ENCODE measurements at regions of chr3 and their contacts with region 1.

Region 1: GRCh38 chr3:148991194-148992026 is at the start of gene GYG1:
- DNase-seq: peak; percentile 82
- H3K4me3 Mint-ChIP-seq: peak within 1 kb of the TSS; percentile 68
- H3K27ac Mint-ChIP-seq: peak within 1 kb of the TSS; percentile 77
- H3K4me1 Mint-ChIP-seq: peaks cover 30% of the 10 kb centered on the region
- H3K27me3 Mint-ChIP-seq: no peaks in the 10 kb centered on the region
- total RNA-seq, gene GYG1: 21.5 to 22.1 TPM

Region 2: DNA sequence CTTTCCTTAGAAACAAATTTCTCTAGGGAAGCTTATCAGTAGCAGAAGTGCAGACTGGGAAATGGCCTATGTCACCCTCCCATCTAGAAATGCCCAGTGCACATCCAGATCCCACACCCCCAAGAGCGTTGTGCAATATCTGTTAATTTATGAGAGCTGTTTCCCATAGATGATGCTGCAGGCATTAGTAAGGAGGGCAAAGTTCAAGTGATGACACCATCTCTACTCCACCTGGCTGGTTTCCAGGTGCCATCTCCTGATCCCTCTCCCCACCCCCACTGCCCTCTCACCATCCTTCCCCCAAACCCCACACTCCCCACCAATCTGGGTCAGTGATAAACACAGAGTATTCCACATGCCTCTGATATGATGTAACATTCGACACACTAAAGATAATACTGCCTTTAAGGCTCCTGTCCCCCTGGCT is 254.3 kb before region 1 on chr3:
- CTCF ChIA-PET with region 1: no interaction called
- POLR2A ChIA-PET with region 1: no interaction called
- intact Hi-C with region 1: no loop called
- DNase-seq: no peak
- H3K4me3 Mint-ChIP-seq: no peak overlapping the region
- H3K27ac Mint-ChIP-seq: no peak overlapping the region
- H3K4me1 Mint-ChIP-seq: no peaks in the 10 kb centered on the region
- H3K27me3 Mint-ChIP-seq: no peaks in the 10 kb centered on the region

Region 3: GRCh38 chr3:148962513-148962912 is 28.9 kb before region 1 on chr3:
- CTCF ChIA-PET with region 1: interaction called, 3 read pairs
- POLR2A ChIA-PET with region 1: interaction called, 3 read pairs
- intact Hi-C with region 1: loop called (anchors 2 kb)
- DNase-seq: no peak
- H3K4me3 Mint-ChIP-seq: no peak overlapping the region
- H3K27ac Mint-ChIP-seq: no peak overlapping the region
- H3K4me1 Mint-ChIP-seq: peaks cover 2% of the 10 kb centered on the region
- H3K27me3 Mint-ChIP-seq: peaks cover 6% of the 10 kb centered on the region

Region 4: DNA sequence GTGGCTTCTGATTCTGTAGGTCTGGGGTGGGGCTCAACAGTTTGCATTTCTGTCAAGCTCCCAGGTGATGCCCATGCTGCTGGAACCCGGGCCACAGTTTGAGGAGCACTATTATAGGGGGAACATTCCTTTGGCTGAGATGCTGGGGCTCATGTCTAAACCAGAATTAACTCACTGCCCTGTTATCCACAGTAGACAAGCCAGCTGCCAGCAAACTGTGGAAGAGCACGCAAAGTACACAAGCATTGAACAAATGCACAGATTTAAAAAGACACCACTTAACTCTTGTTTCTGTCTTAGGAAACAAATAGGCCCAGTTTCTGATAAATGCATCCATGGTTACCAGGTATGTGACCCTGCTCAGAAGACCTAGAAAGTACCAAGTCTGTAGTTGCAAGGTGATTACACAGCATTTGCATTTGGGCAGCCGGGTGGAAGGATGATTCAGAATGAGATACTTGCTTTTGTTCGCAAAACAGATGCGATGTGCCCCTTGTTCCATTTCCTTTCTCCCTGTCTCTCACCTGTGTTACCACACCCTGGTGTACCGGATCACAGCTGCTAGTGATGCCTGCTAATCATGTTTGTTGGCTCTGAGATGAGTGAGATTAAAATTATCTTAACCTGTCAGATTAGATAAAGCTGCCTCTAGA is 12.4 kb after region 1 on chr3:
- CTCF ChIA-PET with region 1: interaction called, 4 read pairs
- POLR2A ChIA-PET with region 1: interaction called, 6 read pairs
- intact Hi-C with region 1: loop called (anchors 2 kb)
- DNase-seq: peak; percentile 52
- H3K4me3 Mint-ChIP-seq: no peak overlapping the region
- H3K27ac Mint-ChIP-seq: no peak overlapping the region
- H3K4me1 Mint-ChIP-seq: peaks cover 23% of the 10 kb centered on the region
- H3K27me3 Mint-ChIP-seq: no peaks in the 10 kb centered on the region

Region 5: DNA sequence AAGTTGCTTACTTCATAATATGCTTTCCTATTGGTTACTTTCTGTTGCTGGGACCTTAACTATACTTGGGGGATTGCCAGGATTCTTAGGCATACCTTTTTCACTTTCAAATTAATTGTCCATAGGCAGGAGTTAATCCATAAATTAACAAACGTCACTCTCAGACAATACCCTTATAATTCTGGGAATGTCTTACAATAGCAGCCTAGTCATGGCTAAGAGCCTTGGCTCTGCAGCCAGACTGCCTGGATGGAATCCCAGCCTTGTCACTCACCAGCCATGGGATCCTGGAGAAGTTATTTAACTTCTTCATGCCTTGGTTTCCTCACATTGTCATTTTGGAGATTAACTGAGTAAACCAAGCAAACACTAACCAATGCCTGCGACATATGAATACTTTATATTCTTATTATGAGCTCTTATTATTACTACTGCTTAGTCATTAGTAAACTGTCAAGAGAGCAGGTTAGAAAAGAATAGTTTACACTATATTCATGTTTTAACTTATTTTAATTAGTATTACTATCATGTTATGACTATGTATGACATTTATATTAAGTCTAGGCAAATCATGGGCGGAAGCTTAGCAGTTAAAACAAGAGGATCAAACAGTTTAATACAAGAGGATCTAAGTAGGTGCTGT is 28.9 kb after region 1 on chr3:
- CTCF ChIA-PET with region 1: no interaction called
- POLR2A ChIA-PET with region 1: interaction called, 4 read pairs
- intact Hi-C with region 1: loop called (anchors 1 kb)
- DNase-seq: no peak
- H3K4me3 Mint-ChIP-seq: no peak overlapping the region
- H3K27ac Mint-ChIP-seq: peak overlapping the region; percentile 39
- H3K4me1 Mint-ChIP-seq: peaks cover 33% of the 10 kb centered on the region
- H3K27me3 Mint-ChIP-seq: no peaks in the 10 kb centered on the region

Region 6: DNA sequence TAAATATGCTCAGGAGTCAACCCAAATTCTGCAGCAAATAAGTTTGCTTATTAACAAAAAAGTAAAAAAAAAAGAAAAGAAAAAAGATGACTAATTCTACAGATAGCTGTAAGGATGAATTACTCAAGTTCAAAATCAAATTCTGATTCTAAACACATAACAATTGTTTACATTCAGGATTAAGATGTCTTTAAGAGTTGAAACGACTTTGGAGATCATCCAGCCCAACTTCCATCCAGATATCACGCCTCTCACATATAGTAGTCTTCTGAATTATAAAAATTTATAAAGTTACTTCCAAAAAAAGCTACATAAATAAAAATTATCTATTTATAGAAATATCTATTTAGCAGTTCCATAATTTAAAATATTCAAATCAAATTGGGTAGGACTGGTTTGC is 39.7 kb after region 1 on chr3:
- CTCF ChIA-PET with region 1: no interaction called
- POLR2A ChIA-PET with region 1: no interaction called
- intact Hi-C with region 1: no loop called
- DNase-seq: no peak
- H3K4me3 Mint-ChIP-seq: no peak overlapping the region
- H3K27ac Mint-ChIP-seq: no peak overlapping the region
- H3K4me1 Mint-ChIP-seq: peaks cover 2% of the 10 kb centered on the region
- H3K27me3 Mint-ChIP-seq: no peaks in the 10 kb centered on the region

Region 7: GRCh38 chr3:149042789-149043386 is 51.5 kb after region 1 on chr3:
- CTCF ChIA-PET with region 1: no interaction called
- POLR2A ChIA-PET with region 1: interaction called, 3 read pairs
- intact Hi-C with region 1: loop called (anchors 1 kb)
- DNase-seq: no peak
- H3K4me3 Mint-ChIP-seq: no peak overlapping the region
- H3K27ac Mint-ChIP-seq: no peak overlapping the region
- H3K4me1 Mint-ChIP-seq: peaks cover 15% of the 10 kb centered on the region
- H3K27me3 Mint-ChIP-seq: no peaks in the 10 kb centered on the region

Region 8: GRCh38 chr3:149086232-149086988 is 95.0 kb after region 1 on chr3 and contains the start of gene HLTF:
- CTCF ChIA-PET with region 1: no interaction called
- POLR2A ChIA-PET with region 1: interaction called, 3 read pairs
- intact Hi-C with region 1: loop called (anchors 1 kb)
- DNase-seq: peak; percentile 93
- H3K4me3 Mint-ChIP-seq: peak within 1 kb of the TSS; percentile 95
- H3K27ac Mint-ChIP-seq: peak within 1 kb of the TSS; percentile 56
- H3K4me1 Mint-ChIP-seq: peaks cover 16% of the 10 kb centered on the region
- H3K27me3 Mint-ChIP-seq: no peaks in the 10 kb centered on the region
- total RNA-seq, gene HLTF: 22.3 to 25.1 TPM

Region 9: DNA sequence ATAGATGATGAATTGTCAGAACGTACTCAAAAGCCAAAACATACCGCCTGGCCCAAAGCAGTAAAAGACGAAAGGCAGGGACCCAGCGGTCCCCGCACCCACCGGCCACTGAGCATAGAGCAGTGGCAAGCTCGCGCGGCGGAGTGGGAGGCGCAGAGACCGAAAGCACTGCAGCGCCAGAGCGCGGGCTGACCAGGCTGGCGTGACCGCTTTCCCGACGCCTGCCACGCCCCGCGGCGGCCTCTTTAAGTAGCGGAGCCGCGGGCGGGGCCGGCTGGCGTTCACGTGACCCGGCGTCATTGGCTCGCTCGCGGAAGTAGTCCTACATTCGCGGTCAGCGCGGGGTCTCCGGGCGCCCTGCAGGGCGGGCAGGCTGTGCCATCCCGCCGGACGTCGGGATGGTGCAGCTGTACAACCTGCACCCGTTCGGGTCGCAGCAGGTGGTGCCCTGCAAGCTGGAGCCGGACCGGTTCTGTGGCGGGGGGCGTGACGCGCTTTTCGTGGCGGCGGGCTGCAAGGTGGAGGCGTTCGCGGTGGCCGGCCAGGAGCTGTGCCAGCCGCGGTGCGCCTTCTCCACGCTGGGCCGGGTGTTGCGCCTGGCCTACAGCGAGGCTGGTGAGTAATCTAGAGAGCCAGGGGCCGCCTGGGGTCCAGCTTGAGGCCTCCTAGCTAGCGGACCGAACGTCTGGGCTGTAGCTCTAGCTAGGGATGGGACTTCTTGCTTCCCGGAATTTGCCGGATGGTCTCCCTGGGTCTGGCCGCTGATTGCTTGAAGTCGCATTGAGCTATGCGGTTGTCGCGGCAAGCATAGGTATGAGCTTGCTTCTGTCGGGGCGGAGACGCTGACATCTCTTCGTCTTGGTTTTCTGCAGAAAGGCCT is 138.2 kb after region 1 on chr3 and contains the start of gene HPS3:
- CTCF ChIA-PET with region 1: no interaction called
- POLR2A ChIA-PET with region 1: interaction called, 3 read pairs
- intact Hi-C with region 1: loop called (anchors 1 kb)
- DNase-seq: peak; percentile 89
- H3K4me3 Mint-ChIP-seq: peak within 1 kb of the TSS; percentile 97
- H3K27ac Mint-ChIP-seq: peak within 1 kb of the TSS; percentile 79
- H3K4me1 Mint-ChIP-seq: peaks cover 39% of the 10 kb centered on the region
- H3K27me3 Mint-ChIP-seq: peaks cover 4% of the 10 kb centered on the region
- total RNA-seq, gene HPS3: 23.0 to 25.2 TPM